PC-9 (cell line): ENCODE measurements at regions of chr5 and their contacts with region 1.

Region 1: DNA sequence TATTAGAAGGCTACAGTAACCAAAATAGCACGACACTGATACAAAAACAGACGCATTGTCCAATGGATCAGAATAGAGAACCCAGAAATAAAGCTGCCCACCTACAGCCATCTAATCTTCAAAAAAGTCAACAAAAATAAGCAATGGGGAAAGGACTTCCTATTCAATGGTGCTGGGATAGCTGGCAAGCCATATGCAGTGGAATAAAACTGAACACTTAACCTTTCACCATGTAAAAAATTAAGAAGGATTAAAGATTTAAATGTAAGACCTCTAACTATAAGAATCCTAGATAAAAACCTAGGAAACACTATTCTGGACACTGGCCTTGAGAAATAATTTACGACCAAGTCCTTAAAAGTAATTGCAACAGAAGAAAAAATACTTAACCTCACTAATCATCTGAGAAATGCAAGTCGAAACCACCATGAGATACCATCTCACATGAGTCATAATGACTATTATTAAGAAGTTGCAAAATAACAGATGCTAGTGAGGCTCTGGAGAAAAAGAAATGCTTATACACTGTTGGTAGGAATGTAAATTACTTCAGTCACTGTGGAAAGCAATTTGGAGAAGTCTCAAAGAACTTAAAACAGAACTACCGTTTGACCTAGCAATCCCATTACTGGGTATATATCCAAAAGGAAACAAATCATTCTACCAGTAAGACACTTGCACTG is 203.3 kb upstream of the CDH9 start:
- DNase-seq: peak; percentile 37 to 78
- H3K4me3 ChIP-seq: no peak overlapping the region
- H3K27ac ChIP-seq: peak overlapping the region; percentile 33
- H3K4me1 ChIP-seq: peaks cover 10% of the 10 kb centered on the region
- H3K27me3 ChIP-seq: no peaks in the 10 kb centered on the region
- CTCF ChIP-seq: no peak

Region 2: DNA sequence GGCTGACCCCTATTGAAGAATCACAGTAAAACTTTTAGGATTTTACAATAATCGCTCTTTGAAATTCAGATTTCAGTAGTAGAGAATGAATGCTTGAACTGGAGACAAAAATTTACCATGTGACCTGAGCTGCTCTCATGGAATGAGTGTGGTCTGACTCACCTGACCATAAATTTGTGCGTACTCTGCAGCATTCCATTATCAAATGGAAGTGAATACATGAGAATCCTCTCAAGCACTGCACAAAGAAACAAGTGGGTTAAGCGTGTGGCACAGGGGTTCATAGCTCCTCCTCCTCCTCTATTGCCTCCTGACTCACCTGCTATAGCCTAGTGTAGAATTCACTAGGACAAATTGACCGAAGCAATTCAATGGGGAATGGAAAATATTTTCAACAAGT is 66.4 kb after region 1 on chr5:
- CTCF ChIA-PET with region 1: no interaction called
- POLR2A ChIA-PET with region 1: interaction called, 11 read pairs
- intact Hi-C with region 1: no loop called
- DNase-seq: peak in 1 of 2 experiments; percentile 43
- H3K4me3 ChIP-seq: no peak overlapping the region
- H3K27ac ChIP-seq: no peak overlapping the region
- H3K4me1 ChIP-seq: no peaks in the 10 kb centered on the region
- H3K27me3 ChIP-seq: no peaks in the 10 kb centered on the region
- CTCF ChIP-seq: no peak

Region 3: DNA sequence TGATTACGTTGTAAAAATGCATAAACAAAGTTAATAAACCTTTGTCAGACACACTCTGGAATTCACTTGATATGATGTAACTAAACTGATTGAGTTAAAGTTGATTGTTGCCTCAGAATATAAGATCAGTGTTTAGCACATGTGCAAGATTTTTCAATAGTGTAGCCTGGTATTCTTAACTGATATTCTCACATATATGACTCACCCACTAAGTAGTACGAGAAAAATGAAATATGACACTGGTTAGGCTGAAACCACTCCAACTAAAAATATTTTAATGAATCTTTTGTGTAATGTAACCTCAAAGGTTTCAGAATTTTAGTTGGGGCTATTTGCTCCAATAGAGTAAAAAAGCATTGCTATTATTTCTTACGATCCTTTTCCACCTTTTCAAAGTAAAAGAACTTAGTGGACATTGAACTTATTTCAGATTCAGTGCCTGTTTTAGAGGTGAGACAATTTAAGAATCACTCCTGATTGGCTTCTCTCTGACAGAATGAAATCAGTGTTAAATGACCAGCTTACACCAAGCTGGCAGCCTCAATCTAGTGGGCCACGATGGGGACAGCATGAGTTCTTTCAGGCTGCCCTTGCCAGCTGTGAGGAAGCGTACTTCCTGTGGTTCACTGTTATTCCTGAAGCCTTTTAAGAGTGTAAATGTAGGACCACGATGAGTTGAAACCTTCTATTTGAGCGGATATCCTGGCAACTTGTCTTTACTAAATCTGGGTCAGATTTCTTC is 74.0 kb after region 1 on chr5:
- CTCF ChIA-PET with region 1: no interaction called
- POLR2A ChIA-PET with region 1: no interaction called
- intact Hi-C with region 1: loop called (anchors 2 kb)
- DNase-seq: peak in 1 of 2 experiments; percentile 26
- H3K4me3 ChIP-seq: no peak overlapping the region
- H3K27ac ChIP-seq: no peak overlapping the region
- H3K4me1 ChIP-seq: no peaks in the 10 kb centered on the region
- H3K27me3 ChIP-seq: no peaks in the 10 kb centered on the region
- CTCF ChIP-seq: no peak

Region 4: DNA sequence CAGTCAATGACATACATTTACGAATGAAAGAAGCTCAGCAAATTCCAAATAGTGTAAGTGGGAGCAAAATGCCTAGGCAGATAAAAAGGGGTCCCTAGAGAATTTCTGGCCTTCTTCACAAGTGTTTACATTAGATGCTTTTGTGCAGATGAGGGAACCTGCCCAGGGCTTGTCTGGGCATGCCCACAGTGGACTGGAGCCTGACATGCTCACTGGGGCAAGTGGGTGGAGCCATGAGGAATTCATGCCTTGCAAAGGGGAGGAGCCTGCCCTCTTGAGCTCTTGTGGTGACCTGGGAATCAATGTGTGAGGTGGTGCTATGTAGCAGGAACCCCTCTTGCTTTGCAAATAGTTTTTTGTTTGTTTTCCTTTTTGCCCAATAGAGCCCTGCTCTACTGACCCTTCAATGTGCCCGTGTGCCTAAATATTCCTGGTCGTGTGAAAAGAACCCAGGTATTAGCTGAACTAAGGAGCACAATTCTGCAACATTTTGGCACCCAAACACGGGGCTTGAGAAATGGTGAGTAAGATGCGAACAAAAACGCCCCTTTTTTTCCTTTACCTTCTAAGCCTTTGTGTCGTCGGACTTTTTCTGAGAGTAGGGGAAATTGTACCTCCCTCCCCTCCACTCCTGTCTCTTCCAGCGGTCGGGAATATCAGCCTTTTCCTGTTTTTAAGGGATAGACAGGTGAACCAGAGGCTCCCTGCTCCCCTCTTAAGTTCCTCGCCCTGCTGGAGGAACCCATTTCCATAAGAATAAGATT is 230.5 kb after region 1 on chr5:
- CTCF ChIA-PET with region 1: no interaction called
- POLR2A ChIA-PET with region 1: no interaction called
- intact Hi-C with region 1: loop called (anchors 2 kb)
- DNase-seq: peak; percentile 41 to 89
- H3K4me3 ChIP-seq: no peak overlapping the region
- H3K27ac ChIP-seq: no peak overlapping the region
- H3K4me1 ChIP-seq: no peaks in the 10 kb centered on the region
- H3K27me3 ChIP-seq: no peaks in the 10 kb centered on the region
- CTCF ChIP-seq: no peak